ENCODE measurements at regions of chr20 and their contacts with region 1.

Region 1: GRCh38 chr20:63782521-63782971 is 43.0 kb downstream of the SLC2A4RG start:
- DNase-seq: no peak
- ATAC-seq: no peak
- H3K4me3 ChIP-seq: no peak overlapping the region
- H3K27ac ChIP-seq: no peak overlapping the region
- H3K4me1 ChIP-seq: no peaks in the 10 kb centered on the region; the same call in 1 of the 2 replicates
- H3K27me3 ChIP-seq: no peaks in the 10 kb centered on the region
- CTCF ChIP-seq: no peak

Region 2: GRCh38 chr20:63594043-63594561 is 188.4 kb before region 1 on chr20:
- CTCF ChIA-PET with region 1: interaction called, 15 read pairs
- POLR2A ChIA-PET with region 1: no interaction called
- in situ Hi-C with region 1: no loop called
- intact Hi-C with region 1: no loop called
- DNase-seq: no peak
- ATAC-seq: no peak
- H3K4me3 ChIP-seq: no peak overlapping the region
- H3K27ac ChIP-seq: no peak overlapping the region
- H3K4me1 ChIP-seq: no peaks in the 10 kb centered on the region
- H3K27me3 ChIP-seq: no peaks in the 10 kb centered on the region
- CTCF ChIP-seq: no peak

Region 3: DNA sequence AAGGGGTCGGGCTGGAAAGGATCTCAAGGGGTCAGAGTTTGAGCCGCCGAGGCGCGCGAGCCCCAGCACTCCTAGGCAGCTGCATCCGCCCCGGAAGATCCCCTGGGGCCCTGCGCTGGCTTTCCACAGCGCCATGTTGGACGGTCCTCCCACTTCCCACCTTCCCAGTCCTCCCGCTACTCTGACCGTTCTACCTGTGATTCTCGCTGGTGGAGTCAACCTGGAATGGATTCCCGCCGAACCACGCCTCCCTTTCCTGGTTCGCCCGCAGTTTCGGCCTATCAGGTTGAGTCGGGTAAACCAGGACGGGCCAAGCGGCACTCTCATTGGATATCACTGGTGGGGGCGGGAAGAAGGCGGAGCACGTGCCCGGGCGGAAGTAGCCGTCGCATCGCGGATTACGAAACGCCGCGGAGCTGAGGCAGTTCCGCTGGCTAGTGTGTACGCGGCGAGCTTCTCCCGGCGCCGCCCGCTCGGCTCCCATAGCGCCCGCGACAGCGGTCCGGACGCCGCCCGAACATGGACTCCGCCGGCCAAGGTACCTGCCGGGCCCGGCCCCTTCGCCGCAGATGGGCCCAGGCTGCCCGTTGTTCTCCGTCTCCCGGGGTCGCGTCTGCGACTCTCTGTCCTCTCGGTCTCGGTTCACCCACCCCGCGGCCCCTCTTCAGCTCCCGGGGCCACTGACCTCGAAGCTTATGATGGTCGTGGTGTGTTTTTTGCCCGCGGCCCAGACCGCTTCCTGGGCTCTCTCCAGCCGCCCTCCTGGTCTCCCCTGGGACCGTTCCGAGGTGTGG is 82.5 kb after region 1 on chr20 and contains the start of gene TPD52L2:
- CTCF ChIA-PET with region 1: no interaction called
- POLR2A ChIA-PET with region 1: interaction called, 10 read pairs
- in situ Hi-C with region 1: no loop called
- intact Hi-C with region 1: no loop called
- DNase-seq: peak; percentile 96
- ATAC-seq: peak; percentile 94
- H3K4me3 ChIP-seq: peak within 1 kb of the TSS; percentile 89 to 98
- H3K27ac ChIP-seq: peak within 1 kb of the TSS; percentile 94
- H3K4me1 ChIP-seq: peaks cover 8% of the 10 kb centered on the region; the same call in 1 of the 2 replicates
- H3K27me3 ChIP-seq: no peaks in the 10 kb centered on the region
- CTCF ChIP-seq: no peak
- total RNA-seq, gene TPD52L2: 113 TPM